ENCODE measurements at regions of chr19 and their contacts with region 1.

Region 1: DNA sequence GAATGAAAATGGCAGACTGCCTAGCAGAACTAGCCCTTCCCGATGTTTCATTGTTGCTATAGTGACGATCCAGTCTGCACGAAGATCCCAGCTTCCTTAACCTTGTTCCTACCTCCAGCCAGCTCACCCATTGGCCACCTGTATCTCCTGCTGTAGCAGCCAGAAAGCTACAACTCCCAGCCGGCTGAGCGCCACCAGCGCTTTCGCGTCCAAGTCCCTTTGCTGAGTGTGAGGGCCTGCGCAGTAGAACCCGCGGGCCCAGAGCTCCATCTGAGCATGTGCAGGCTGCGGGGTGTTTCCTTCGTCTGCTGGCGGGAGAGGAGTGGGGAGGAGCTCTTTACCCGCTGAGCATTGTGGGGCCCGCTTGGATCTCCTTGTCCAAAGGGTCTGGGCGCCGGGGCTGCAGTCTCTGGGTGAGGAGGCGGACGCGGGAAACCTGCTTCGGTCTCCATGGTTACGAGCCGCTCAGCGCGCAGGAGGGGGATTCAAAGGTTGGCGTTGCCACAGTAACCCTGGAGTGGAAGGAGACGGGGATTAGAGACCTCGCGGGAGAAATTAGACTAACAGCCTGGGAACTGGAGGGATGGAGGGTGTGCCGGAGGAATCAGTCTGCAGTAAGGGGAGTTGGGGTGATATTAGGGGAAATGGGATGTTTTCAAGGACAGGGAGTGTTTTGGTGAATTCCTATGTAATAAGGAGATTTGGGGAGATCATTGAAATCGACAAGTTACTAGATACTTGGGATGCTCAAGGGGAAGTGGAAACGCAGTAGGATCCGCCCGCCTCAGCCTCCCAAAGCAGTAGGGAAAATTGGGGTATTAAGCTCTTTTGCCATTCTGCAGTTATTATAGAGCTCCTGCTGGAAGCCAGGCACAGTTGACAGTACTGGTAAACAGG is 33.5 kb downstream of the ZSWIM9 start:
- H3K4me3 ChIP-seq: peak overlapping the region; percentile 63
- H3K27ac ChIP-seq: peak overlapping the region; percentile 37
- H3K4me1 ChIP-seq: peaks cover 5% of the 10 kb centered on the region; the same call in 1 of the 2 replicates
- CTCF ChIP-seq: no peak

Region 2: GRCh38 chr19:48020686-48021085 is 183.3 kb before region 1 on chr19:
- CTCF ChIA-PET with region 1: no interaction called
- POLR2A ChIA-PET with region 1: no interaction called
- H3K4me3 ChIP-seq: no peak overlapping the region
- H3K27ac ChIP-seq: no peak overlapping the region
- H3K4me1 ChIP-seq: no peaks in the 10 kb centered on the region
- CTCF ChIP-seq: no peak

Region 3: DNA sequence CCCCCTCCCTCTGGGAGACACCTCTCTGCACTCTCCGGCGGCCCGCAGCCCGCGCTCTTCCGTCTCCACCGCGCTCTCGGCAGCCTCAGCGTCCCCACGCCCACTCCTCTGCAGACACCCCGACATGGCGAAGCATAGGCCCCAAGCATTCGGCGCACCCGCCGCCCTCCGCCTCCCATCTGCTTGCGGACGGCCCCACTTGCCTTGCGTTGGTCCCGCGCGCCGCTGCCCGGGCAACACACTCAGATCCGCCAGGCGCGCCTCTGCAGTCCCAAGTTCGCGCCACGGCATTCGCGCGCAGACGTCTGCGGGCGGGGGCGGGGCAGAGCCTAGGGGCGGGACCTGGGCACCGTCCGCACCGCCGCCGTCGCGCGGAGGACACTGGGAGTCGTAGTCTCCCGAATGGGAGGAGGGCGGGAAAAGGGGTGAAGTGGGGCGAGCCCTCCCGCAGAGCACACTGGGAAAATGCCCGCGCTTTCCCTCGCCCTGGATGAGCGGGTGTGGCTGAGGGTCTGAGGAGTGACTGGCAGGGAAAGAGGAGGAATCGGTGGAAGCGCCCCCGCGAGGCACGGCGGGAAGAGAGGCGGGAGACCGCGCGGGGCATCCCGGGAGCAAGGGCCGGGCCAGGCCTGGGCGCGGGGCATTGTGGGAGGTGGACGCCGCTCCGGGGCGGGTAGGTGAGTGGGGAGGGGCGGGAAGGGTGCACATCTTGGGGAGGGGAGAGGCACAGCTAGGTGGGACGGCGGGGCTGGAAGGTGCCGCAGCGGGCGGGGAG is 33.8 kb before region 1 on chr19 and contains the starts of genes LIG1 and ZSWIM9:
- CTCF ChIA-PET with region 1: no interaction called
- POLR2A ChIA-PET with region 1: interaction called, 54 read pairs
- H3K4me3 ChIP-seq: peak within 1 kb of the TSS; percentile 98
- H3K27ac ChIP-seq: peak within 1 kb of the TSS; percentile 99
- H3K4me1 ChIP-seq: peaks cover 13% of the 10 kb centered on the region
- CTCF ChIP-seq: peak; percentile 87

Region 4: GRCh38 chr19:48190288-48190884 is 13.6 kb before region 1 on chr19:
- CTCF ChIA-PET with region 1: interaction called, 6 read pairs
- POLR2A ChIA-PET with region 1: interaction called, 25 read pairs
- H3K4me3 ChIP-seq: no peak overlapping the region
- H3K27ac ChIP-seq: no peak overlapping the region
- H3K4me1 ChIP-seq: no peaks in the 10 kb centered on the region
- CTCF ChIP-seq: peak; percentile 65; the same call in 1 of the 2 replicates

Region 5: DNA sequence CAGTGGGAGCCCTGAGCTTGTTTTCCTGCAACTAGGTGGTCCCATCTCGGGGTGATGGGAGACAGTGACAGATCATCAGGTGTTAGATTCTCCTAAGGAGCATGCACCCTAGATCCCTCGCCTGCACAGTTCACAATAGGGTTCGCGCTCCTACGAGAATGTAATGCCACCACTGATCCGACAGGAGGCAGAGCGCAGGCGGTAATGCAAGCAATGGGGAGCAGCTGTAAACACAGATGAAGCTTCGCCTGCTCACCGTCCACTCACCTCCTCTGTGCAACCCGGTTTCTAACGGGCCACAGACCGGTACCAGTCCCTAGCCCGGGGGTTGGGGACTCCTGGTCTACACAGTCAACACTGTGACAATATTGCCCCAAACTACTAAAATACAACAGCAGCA is 13.0 kb after region 1 on chr19:
- CTCF ChIA-PET with region 1: interaction called, 3 read pairs
- POLR2A ChIA-PET with region 1: interaction called, 10 read pairs
- H3K4me3 ChIP-seq: no peak overlapping the region
- H3K27ac ChIP-seq: no peak overlapping the region
- H3K4me1 ChIP-seq: no peaks in the 10 kb centered on the region
- CTCF ChIP-seq: no peak

Region 6: DNA sequence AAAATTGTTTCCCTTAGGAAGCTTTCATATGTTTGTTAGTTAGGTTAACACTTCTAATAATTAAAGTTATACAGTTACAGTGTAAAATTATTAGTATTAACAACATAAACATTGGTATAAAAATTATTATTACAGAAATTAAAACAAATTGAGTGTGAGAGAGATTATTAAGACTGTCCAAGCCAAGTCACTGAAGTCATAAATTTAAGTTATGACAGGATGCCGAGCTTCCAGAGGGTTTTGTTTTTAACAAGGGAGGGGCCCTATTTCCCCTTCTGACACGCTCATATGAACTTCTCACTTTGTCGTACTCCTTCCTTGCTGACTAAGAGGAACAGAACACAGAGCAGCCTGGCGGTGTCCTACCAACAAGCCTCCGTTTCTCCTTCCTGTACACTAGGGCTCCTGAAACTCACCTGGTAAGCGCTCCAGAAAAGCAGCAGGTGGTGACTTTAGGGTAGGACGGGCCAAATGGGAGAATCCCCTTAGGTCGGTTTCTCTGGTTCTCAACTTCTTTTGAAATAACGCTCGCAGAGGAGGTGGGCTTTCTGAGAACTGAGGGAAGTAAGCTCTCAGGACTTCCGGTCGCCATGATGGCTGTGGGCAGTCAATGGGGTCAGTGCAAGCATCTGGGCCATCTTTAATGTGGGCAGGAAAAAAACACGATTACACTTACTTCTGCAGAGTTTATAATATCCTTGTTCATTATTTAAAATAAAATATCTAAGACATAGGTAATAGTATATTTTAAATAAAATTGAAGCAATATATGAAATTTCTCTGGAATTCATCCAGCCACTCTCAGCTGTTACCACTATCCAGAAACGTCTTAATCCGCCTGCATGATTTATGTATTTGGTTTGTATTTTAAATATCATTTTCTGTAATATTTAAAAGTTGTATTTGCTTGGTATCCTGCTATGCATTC is 51.7 kb after region 1 on chr19 and contains the start of gene CARD8:
- CTCF ChIA-PET with region 1: interaction called, 23 read pairs
- POLR2A ChIA-PET with region 1: interaction called, 19 read pairs
- H3K4me3 ChIP-seq: peak within 1 kb of the TSS; percentile 65
- H3K27ac ChIP-seq: peak within 1 kb of the TSS; percentile 70
- H3K4me1 ChIP-seq: no peaks in the 10 kb centered on the region
- CTCF ChIP-seq: no peak

Measured in HEK293 (cell line).